Breast epithelium (tissue), 4 donors: ENCODE measurements at regions of chr3 and their contacts with region 1.

Region 1: DNA sequence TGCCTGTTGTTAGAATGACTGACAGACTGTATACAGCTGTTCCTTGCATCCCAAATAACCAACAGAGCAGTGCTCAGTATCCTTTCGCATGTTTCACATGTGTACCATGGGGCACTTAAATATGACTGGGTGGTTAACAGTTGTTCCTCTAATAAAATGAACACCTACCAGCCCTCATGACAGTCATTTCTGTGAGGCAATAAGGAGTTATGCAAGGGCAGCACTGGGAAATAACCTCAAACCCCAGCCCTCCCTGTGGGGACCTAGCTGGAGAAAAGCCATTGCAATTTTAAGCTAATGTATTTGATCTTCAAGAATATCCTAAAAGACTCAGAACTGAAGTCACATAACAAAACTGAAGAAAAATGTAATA is 7.3 kb downstream of the RFT1 start:
- DNase-seq: no peak
- H3K4me3 ChIP-seq: no peak overlapping the region
- H3K27ac ChIP-seq: no peak overlapping the region
- H3K4me1 ChIP-seq: no peaks in the 10 kb centered on the region
- H3K27me3 ChIP-seq: no peaks in the 10 kb centered on the region
- CTCF ChIP-seq: no peak
- POLR2A ChIP-seq: no peak

Region 2: DNA sequence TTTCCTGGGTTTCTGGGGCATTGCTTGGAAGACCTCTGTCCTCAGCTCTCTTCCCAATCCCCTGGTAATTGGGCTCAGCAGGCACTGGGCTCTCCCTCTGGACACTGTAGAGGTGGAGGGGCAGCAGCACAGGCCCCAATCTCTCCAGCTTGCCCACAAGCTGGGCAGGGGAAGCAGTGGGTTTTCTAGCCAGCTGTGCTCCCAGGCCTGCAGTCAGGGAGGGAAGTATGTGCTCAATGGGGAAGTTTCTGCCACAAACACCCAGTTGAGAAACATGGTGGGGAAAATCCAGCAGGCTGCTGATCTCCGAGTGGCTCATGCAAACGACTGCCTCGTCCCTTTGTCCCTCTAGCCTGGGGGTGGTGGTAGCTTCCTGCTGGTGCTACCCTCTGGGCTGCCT is 20.1 kb after region 1 on chr3:
- intact Hi-C with region 1: loop called (anchors 1 kb)
- DNase-seq: no peak
- H3K4me3 ChIP-seq: no peak overlapping the region
- H3K27ac ChIP-seq: no peak overlapping the region
- H3K4me1 ChIP-seq: no peaks in the 10 kb centered on the region
- H3K27me3 ChIP-seq: no peaks in the 10 kb centered on the region
- CTCF ChIP-seq: no peak
- POLR2A ChIP-seq: no peak